ENCODE measurements at regions of chr2 and their contacts with region 1.

Region 1: GRCh38 chr2:177148477-177149154 is 64.0 kb upstream of the HNRNPA3 start:
- DNase-seq: peak; percentile 66
- ATAC-seq: peak; percentile 99
- H3K4me3 ChIP-seq: peak overlapping the region; percentile 25 to 67 (median 36)
- H3K27ac ChIP-seq: no peak overlapping the region
- H3K4me1 ChIP-seq: peaks cover 11% of the 10 kb centered on the region
- H3K27me3 ChIP-seq: peaks cover 3 to 50% of the 10 kb centered on the region in 2 experiments; a peak in 4 of 5 replicates
- CTCF ChIP-seq: peak; percentile 92
- EP300 ChIP-seq: no peak
- POLR2A ChIP-seq: no peak
- RAD21 ChIP-seq: peak; percentile 61; the same call in 1 of the 2 replicates

Region 2: GRCh38 chr2:176126929-176127773 is 1021.5 kb before region 1 on chr2:
- CTCF ChIA-PET with region 1: interaction called, 5 read pairs
- POLR2A ChIA-PET with region 1: no interaction called
- in situ Hi-C with region 1: loop called (anchors 5 kb)
- intact Hi-C with region 1: loop called (anchors 2 kb)
- DNase-seq: peak; percentile 13
- ATAC-seq: no peak
- H3K4me3 ChIP-seq: no peak overlapping the region
- H3K27ac ChIP-seq: no peak overlapping the region
- H3K4me1 ChIP-seq: no peaks in the 10 kb centered on the region
- H3K27me3 ChIP-seq: peaks cover 15 to 81% of the 10 kb centered on the region in 2 experiments
- CTCF ChIP-seq: peak; percentile 79
- EP300 ChIP-seq: no peak
- POLR2A ChIP-seq: no peak
- RAD21 ChIP-seq: peak; percentile 76; the same call in 1 of the 2 replicates

Region 3: GRCh38 chr2:176653479-176654443 is 494.9 kb before region 1 on chr2:
- CTCF ChIA-PET with region 1: no interaction called
- POLR2A ChIA-PET with region 1: no interaction called
- in situ Hi-C with region 1: no loop called
- intact Hi-C with region 1: loop called (anchors 1 kb)
- DNase-seq: peak; percentile 57
- ATAC-seq: peak; percentile 94
- H3K4me3 ChIP-seq: no peak overlapping the region
- H3K27ac ChIP-seq: no peak overlapping the region
- H3K4me1 ChIP-seq: no peaks in the 10 kb centered on the region
- H3K27me3 ChIP-seq: peaks cover 0 to 15% of the 10 kb centered on the region in 2 experiments; a peak in 2 of 5 replicates
- CTCF ChIP-seq: peak; percentile 52
- EP300 ChIP-seq: no peak
- POLR2A ChIP-seq: no peak
- RAD21 ChIP-seq: 0 out of 2 replicates have a peak, but pooled peaks have one; percentile 22

Region 4: DNA sequence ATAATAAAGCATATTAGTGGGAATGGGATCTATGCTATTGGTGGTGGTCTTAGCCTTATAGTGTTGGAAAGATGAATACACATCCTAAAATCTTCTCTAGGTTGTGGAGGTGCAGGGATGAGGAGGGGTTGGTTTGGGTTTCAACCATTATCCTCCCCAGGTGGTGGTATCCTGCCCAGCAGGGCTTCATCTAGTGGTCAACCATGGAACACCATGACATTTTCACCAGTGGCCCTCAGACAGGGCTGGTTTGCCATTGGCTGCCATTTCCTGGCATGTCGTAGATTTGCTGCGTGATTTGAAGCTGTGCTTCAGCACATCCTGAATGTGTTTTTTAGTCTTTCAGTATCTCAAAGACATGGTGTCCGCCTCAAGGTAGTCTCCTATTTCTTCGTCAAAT is 327.3 kb before region 1 on chr2:
- CTCF ChIA-PET with region 1: no interaction called
- POLR2A ChIA-PET with region 1: no interaction called
- in situ Hi-C with region 1: loop called (anchors 10 kb)
- intact Hi-C with region 1: no loop called
- DNase-seq: no peak
- ATAC-seq: peak; percentile 84
- H3K4me3 ChIP-seq: no peak overlapping the region
- H3K27ac ChIP-seq: no peak overlapping the region
- H3K4me1 ChIP-seq: no peaks in the 10 kb centered on the region
- H3K27me3 ChIP-seq: peaks cover 0 to 31% of the 10 kb centered on the region in 2 experiments; a peak in 3 of 5 replicates
- CTCF ChIP-seq: no peak
- EP300 ChIP-seq: no peak
- POLR2A ChIP-seq: no peak
- RAD21 ChIP-seq: no peak

Region 5: GRCh38 chr2:177353187-177353478 is 204.5 kb after region 1 on chr2:
- CTCF ChIA-PET with region 1: no interaction called
- POLR2A ChIA-PET with region 1: no interaction called
- in situ Hi-C with region 1: no loop called
- intact Hi-C with region 1: no loop called
- DNase-seq: no peak
- ATAC-seq: no peak
- H3K4me3 ChIP-seq: no peak overlapping the region
- H3K27ac ChIP-seq: no peak overlapping the region
- H3K4me1 ChIP-seq: peaks cover 51% of the 10 kb centered on the region
- H3K27me3 ChIP-seq: no peaks in the 10 kb centered on the region
- CTCF ChIP-seq: no peak
- EP300 ChIP-seq: no peak
- POLR2A ChIP-seq: no peak
- RAD21 ChIP-seq: no peak

Region 6: DNA sequence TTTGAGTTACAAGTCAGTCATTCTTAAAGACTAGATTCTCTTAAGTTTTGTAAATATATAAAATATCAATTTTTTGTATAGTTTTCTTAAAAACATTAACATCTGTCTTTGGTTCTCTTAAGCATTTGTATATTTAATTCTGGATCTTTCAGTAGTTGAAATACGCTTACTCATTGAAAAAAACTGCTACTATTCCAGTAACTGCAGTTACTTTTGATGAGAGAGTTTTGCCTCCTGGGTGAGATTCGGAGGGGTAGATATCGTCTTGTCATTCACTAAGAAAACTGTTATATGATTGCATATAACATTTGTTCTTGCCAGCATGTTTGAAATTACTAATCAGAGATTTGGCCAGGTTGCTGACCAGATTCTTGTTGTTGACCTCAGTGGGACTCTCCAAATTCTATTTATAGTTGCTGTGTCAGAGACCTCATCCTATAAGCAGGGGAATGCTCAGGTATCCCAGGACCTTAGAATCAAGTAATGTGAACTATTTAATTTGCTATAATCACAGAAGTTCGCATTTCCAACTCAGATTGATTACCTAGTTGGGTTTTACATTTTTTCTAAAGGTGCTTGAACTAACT is 251.8 kb after region 1 on chr2:
- CTCF ChIA-PET with region 1: no interaction called
- POLR2A ChIA-PET with region 1: no interaction called
- in situ Hi-C with region 1: no loop called
- intact Hi-C with region 1: no loop called
- DNase-seq: no peak
- ATAC-seq: no peak
- H3K4me3 ChIP-seq: no peak overlapping the region
- H3K27ac ChIP-seq: peak overlapping the region; percentile 86
- H3K4me1 ChIP-seq: peaks cover 99% of the 10 kb centered on the region
- H3K27me3 ChIP-seq: no peaks in the 10 kb centered on the region
- CTCF ChIP-seq: no peak
- EP300 ChIP-seq: no peak
- POLR2A ChIP-seq: no peak
- RAD21 ChIP-seq: no peak

Region 7: DNA sequence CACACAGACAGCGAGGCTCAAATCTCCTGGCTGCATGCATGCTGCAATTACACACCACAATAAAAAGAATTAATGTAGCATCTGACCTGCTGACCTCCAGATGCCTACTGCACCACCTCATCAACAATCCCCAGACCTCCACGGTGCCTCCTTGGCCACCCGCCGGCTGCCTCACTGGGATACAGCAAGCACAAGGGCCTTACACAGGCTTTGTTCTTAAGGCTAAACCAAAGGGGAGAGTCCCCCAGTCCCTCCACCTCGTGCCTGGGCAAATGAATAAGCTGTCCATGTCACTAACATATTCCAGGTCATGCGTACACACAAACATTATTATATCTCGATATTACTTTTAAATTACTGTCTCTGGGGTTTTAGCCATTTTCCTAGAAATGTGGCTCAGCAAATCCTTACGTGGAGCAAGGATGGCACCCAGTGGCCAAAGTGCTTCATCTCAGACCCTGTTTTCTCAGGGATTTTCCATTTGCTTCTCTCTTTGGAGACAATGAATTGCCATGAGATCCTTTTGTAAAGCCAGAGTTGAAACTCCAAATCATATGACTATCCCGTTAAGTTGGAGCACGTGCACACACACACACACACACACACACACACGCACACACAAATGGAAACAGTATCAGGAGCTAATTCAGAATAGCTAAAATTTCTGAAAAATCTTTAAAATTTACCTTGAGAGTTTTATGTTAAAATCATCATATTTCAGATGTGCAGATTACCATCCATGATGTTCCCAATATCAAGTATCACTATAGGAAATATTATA is 610.2 kb after region 1 on chr2:
- CTCF ChIA-PET with region 1: no interaction called
- POLR2A ChIA-PET with region 1: no interaction called
- in situ Hi-C with region 1: no loop called
- intact Hi-C with region 1: loop called (anchors 10 kb)
- DNase-seq: peak; percentile 16
- ATAC-seq: no peak
- H3K4me3 ChIP-seq: no peak overlapping the region
- H3K27ac ChIP-seq: no peak overlapping the region
- H3K4me1 ChIP-seq: peaks cover 5% of the 10 kb centered on the region; the same call in 1 of the 2 replicates
- H3K27me3 ChIP-seq: no peaks in the 10 kb centered on the region
- CTCF ChIP-seq: peak; percentile 66
- EP300 ChIP-seq: no peak
- POLR2A ChIP-seq: no peak
- RAD21 ChIP-seq: peak; percentile 51; the same call in 1 of the 2 replicates

Measured in HepG2 (cell line).